CD8-positive, alpha-beta T cell (primary cell): ENCODE measurements at regions of chr9 and their contacts with region 1.

Region 1: DNA sequence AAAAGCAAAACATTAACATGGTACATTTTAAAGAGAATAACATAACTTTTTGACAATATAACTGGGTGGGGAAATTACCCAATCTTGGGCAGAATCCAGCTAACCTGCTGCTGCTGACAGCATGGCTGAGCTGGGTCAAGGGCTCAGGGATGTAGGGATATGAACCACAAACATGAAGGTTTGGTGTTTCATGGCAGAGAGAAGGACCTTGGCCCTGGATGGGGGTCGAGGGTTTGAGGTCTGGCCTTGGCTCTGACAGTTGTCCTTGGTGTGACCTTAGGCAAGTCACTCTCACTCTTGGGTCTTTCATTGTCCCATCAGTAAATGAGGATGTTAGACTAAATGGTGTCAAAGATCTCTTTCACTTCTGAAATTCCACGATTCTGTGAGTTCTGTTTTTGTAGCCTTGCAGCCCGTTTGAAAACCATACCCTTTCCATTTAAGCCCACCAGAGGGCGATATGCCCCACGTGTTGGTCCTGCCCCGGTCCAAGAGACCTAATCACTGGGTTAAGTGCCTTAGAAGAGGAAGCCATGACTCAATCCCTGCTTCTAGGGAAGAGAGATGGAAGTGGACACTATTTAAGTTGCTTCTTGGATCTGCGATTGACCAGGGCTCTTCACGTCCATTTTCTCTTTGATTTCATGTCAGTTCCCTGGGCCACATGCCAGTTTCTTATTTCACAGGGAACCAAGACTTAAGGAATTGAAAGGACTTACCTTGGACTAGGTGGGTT is 56.8 kb upstream of the TEX48 start:
- DNase-seq: peak; percentile 51 to 85 (median 74)
- ATAC-seq: peak; percentile 80
- H3K4me3 ChIP-seq: no peak overlapping the region
- H3K4me3 Mint-ChIP-seq: no peak overlapping the region
- H3K27ac ChIP-seq: no peak overlapping the region
- H3K27ac Mint-ChIP-seq: peak overlapping the region; percentile 47
- H3K4me1 ChIP-seq: peaks cover 25% of the 10 kb centered on the region
- H3K4me1 Mint-ChIP-seq: peaks cover 40% of the 10 kb centered on the region
- H3K27me3 ChIP-seq: no peaks in the 10 kb centered on the region
- H3K27me3 Mint-ChIP-seq: no peaks in the 10 kb centered on the region
- CTCF ChIP-seq: peak; percentile 92

Region 2: DNA sequence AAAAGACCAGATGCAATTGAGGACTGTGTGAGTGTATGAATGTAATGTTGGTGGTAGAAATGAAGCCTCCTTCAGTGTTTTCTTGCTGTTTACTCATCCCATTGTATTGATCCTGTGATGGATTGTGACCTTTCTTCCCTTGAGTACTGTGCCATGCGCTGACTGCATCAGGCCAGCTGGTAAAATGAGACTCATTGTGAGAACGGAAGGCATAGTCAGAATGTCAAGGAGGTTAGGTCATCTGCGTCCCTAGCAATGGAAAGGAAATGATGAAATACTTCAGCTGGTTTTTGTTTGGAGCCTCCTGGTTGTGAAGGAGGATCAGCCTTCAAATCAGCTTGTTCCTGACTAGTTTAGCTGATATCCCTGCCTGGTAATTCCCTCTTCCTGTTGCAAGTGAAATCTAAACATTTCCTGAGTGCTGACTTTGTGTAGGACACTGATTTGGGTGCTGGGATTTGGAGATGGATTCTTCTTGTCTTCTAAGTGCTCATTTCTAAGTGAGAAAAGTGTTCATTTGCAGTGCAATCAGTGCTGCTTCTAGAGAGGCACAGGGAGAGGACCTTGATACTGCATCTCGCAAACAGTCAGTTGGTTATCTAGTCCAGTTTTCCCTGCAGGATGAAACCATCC is 156.2 kb after region 1 on chr9:
- CTCF ChIA-PET with region 1: interaction called, 27 read pairs
- POLR2A ChIA-PET with region 1: interaction called, 6 read pairs
- intact Hi-C with region 1: no loop called
- DNase-seq: no peak
- ATAC-seq: no peak
- H3K4me3 ChIP-seq: no peak overlapping the region
- H3K4me3 Mint-ChIP-seq: peak overlapping the region; percentile 26
- H3K27ac ChIP-seq: peak overlapping the region in 1 of 2 experiments; percentile 1
- H3K27ac Mint-ChIP-seq: peak overlapping the region; percentile 37
- H3K4me1 ChIP-seq: peaks cover 64% of the 10 kb centered on the region
- H3K4me1 Mint-ChIP-seq: peaks cover 49% of the 10 kb centered on the region
- H3K27me3 ChIP-seq: no peaks in the 10 kb centered on the region
- H3K27me3 Mint-ChIP-seq: no peaks in the 10 kb centered on the region
- CTCF ChIP-seq: no peak

Region 3: GRCh38 chr9:114914139-114914538 is 175.4 kb after region 1 on chr9:
- CTCF ChIA-PET with region 1: interaction called, 185 read pairs
- POLR2A ChIA-PET with region 1: interaction called, 3 read pairs
- intact Hi-C with region 1: no loop called
- DNase-seq: no peak
- ATAC-seq: no peak
- H3K4me3 ChIP-seq: no peak overlapping the region
- H3K4me3 Mint-ChIP-seq: no peak overlapping the region
- H3K27ac ChIP-seq: peak overlapping the region in 1 of 2 experiments; percentile 29
- H3K27ac Mint-ChIP-seq: peak overlapping the region; percentile 84
- H3K4me1 ChIP-seq: peaks cover 36% of the 10 kb centered on the region
- H3K4me1 Mint-ChIP-seq: peaks cover 86% of the 10 kb centered on the region
- H3K27me3 ChIP-seq: no peaks in the 10 kb centered on the region
- H3K27me3 Mint-ChIP-seq: no peaks in the 10 kb centered on the region
- CTCF ChIP-seq: no peak

Region 4: DNA sequence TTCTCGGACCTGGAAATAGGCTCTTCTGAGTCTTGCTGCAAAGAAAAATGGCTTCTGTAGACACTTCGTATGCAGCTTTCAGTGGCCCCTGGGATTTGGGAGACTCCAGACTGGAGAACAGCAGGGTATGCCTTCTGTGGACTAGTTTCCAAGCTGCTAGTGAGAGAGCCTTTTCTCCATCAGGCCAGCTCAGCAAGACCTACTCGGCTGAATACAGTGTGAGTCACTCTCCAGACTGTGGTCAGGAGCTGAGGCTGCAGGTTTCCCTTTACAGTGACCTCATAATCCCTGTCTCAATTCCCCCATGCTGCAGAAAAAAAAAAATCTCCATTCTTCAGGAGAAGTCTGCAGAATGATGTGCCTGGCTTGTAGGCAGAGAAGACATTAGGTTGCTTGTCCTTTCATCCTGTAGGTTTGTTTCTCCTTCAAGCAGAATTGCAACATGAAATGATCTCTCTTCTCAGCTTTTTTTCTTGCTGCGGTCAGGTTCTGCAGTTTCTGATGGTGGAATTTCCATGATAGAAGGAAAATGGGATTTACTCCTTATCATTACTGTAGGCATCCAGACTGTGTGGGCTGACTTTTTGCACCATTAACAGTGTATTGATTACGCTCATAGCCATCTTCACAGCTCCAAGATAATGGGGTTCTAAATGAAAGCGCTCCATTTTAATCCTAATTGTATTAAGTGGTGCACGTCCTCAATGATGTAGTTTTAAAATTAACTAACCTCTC is 270.0 kb after region 1 on chr9:
- CTCF ChIA-PET with region 1: interaction called, 39 read pairs
- POLR2A ChIA-PET with region 1: no interaction called
- intact Hi-C with region 1: no loop called
- DNase-seq: peak in 1 of 9 experiments; percentile 21
- ATAC-seq: no peak
- H3K4me3 ChIP-seq: no peak overlapping the region
- H3K4me3 Mint-ChIP-seq: no peak overlapping the region
- H3K27ac ChIP-seq: no peak overlapping the region
- H3K27ac Mint-ChIP-seq: no peak overlapping the region
- H3K4me1 ChIP-seq: peaks cover 2% of the 10 kb centered on the region
- H3K4me1 Mint-ChIP-seq: peaks cover 3% of the 10 kb centered on the region
- H3K27me3 ChIP-seq: no peaks in the 10 kb centered on the region
- H3K27me3 Mint-ChIP-seq: no peaks in the 10 kb centered on the region
- CTCF ChIP-seq: no peak